AG04449 (cell line): ENCODE measurements at regions of chr3 and their contacts with region 1.

Region 1: GRCh38 chr3:78978037-78978436 is 789.8 kb downstream of the ROBO1 start:
- DNase-seq: no peak
- H3K4me3 ChIP-seq: no peak overlapping the region
- CTCF ChIP-seq: peak; percentile 40

Region 2: DNA sequence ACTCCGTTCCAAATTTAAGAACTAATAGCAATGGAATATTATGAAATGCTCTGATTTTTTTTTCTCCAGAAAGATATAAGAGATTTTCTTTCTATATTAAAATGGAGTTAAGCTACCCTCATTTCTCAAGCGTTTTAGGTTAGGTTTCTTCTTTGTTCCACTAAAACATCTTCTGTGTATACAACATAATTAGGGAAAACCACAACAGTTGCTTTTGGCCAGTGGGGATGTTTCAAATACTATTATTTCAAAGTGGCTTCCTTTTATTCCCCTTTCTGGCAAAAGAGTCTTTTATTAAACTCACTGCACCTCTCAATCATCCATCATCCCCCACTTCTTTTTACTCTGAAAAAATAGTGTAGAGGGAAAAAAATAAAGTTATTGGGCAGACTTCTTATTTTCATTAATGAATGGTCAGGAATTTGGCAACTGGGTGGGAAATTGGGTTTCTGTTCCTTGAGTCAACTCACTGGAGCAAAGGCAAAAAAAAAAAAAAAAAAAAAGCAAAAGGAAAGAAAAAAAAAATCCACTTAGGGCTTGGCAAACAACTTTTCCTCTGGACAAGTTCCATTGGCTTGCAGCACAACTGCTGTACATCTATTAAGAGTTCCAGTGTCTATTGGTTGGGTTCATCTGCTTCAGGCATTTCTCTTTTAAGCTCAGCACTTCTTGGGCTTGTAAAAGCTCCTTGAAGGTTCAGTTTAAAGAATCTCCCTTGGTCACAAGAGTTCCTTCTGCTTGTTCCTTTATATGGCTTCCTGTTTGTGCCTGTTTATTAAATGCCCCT is 173.6 kb before region 1 on chr3:
- CTCF ChIA-PET with region 1: no interaction called
- POLR2A ChIA-PET with region 1: no interaction called
- DNase-seq: no peak
- H3K4me3 ChIP-seq: no peak overlapping the region
- CTCF ChIP-seq: no peak

Region 3: DNA sequence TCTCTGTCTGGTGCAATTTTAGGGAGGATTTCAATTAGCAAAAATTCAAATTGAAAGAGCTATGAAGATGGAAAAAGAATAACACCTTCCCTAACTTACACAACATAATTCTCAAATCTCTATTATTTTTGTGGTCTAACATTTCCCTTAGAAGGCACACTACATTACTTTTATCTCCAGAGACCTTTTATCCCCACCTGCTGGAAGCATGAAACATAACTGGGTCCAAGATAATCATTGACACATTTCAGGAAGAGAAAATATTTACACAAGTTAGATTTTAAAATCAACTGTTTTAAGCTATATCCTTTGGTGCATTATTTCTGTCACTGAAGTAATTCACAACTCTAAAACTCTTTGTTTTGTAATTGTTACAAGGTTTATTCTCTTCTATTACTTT is 10.3 kb after region 1 on chr3:
- CTCF ChIA-PET with region 1: interaction called, 31 read pairs
- POLR2A ChIA-PET with region 1: interaction called, 3 read pairs
- DNase-seq: no peak
- H3K4me3 ChIP-seq: no peak overlapping the region
- CTCF ChIP-seq: peak; percentile 20

Region 4: GRCh38 chr3:79040701-79041100 is 62.7 kb after region 1 on chr3:
- CTCF ChIA-PET with region 1: no interaction called
- POLR2A ChIA-PET with region 1: no interaction called
- DNase-seq: peak; percentile 58
- H3K4me3 ChIP-seq: no peak overlapping the region
- CTCF ChIP-seq: no peak